CD8-positive, alpha-beta T cell (primary cell): ENCODE measurements at regions of chr14 and their contacts with region 1.

Region 1: DNA sequence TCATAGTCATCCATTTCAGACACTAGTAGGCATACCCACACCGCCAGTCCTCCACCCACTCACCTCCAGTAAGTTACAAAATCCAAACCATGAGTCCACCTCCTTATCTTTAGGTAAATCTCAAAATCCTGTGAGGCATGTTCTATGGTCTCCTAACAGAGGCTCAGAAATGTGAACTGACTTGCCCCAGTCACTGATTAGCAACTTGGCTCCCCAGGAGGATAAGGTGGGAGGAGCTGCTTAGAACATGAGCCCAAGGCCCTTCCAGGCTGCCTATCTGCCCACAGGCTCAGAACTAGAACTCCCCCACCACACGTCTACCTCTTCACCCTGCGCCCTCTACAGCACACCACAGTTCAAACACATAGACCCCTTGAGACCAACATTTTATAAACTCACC is 19.9 kb downstream of the SETD3 start:
- DNase-seq: no peak
- ATAC-seq: no peak
- H3K4me3 ChIP-seq: no peak overlapping the region
- H3K4me3 Mint-ChIP-seq: no peak overlapping the region
- H3K27ac ChIP-seq: no peak overlapping the region
- H3K27ac Mint-ChIP-seq: peak overlapping the region; percentile 15
- H3K4me1 ChIP-seq: no peaks in the 10 kb centered on the region
- H3K4me1 Mint-ChIP-seq: peaks cover 5% of the 10 kb centered on the region
- H3K27me3 ChIP-seq: no peaks in the 10 kb centered on the region
- H3K27me3 Mint-ChIP-seq: no peaks in the 10 kb centered on the region
- CTCF ChIP-seq: no peak

Region 2: DNA sequence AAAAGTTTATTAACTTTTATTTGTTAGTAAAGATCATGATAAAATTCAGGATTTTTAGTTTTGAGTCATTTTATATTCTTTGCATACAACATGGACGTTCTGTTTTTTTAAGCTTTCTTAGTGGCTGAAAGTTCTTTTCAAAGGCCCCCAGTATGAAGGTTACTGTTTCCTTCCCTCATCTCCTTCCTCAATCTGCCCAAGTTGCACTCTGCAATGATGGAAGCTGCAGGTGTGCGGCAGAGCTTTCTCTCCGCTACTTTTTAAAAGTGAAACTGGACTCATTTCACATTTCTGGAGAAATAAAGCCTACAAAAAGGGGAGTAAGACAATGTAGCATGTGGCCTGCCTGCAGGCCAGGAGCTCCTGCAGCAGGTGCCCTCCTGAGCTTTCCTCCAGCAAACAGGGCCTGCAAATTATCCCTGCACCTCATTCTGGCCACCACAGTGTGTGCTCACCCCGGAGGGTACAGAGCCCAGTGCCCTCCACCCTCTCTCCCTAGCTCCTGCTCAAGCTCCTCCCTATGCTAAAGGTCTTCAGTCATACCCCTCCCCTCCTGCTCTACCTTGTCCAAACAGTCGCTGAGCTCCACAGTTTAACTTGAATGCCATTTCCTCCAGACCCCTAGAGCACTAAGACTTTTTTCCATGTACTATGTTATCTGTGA is 59.0 kb before region 1 on chr14:
- CTCF ChIA-PET with region 1: no interaction called
- POLR2A ChIA-PET with region 1: no interaction called
- intact Hi-C with region 1: loop called in 1 of 2 experiments (anchors 2 kb)
- DNase-seq: no peak
- ATAC-seq: no peak
- H3K4me3 ChIP-seq: no peak overlapping the region
- H3K4me3 Mint-ChIP-seq: no peak overlapping the region
- H3K27ac ChIP-seq: no peak overlapping the region
- H3K27ac Mint-ChIP-seq: peak overlapping the region; percentile 69
- H3K4me1 ChIP-seq: no peaks in the 10 kb centered on the region
- H3K4me1 Mint-ChIP-seq: peaks cover 7% of the 10 kb centered on the region
- H3K27me3 ChIP-seq: no peaks in the 10 kb centered on the region
- H3K27me3 Mint-ChIP-seq: no peaks in the 10 kb centered on the region
- CTCF ChIP-seq: no peak

Region 3: DNA sequence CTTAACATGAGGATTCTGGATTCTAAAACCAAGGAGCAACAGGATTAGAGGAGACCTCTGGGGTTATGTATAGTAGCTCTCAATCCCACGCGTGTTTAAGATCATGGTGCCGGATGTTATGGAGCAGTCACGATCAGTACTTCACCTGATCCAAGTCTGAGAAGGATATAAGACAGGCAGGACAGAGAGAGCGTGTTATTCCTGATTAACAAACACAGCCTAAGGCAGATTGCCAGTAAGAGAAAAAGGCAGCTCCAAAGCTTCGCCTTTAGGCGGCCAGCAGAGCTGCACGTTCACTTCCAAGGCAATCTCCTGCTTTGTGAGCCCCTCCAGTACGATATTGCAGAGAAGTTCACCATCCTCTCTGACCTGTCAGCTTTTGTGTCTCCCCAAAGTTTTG is 14.4 kb after region 1 on chr14:
- CTCF ChIA-PET with region 1: no interaction called
- POLR2A ChIA-PET with region 1: no interaction called
- intact Hi-C with region 1: no loop called
- DNase-seq: no peak
- ATAC-seq: no peak
- H3K4me3 ChIP-seq: no peak overlapping the region
- H3K4me3 Mint-ChIP-seq: no peak overlapping the region
- H3K27ac ChIP-seq: no peak overlapping the region
- H3K27ac Mint-ChIP-seq: no peak overlapping the region
- H3K4me1 ChIP-seq: peaks cover 14% of the 10 kb centered on the region
- H3K4me1 Mint-ChIP-seq: peaks cover 53% of the 10 kb centered on the region
- H3K27me3 ChIP-seq: no peaks in the 10 kb centered on the region
- H3K27me3 Mint-ChIP-seq: no peaks in the 10 kb centered on the region
- CTCF ChIP-seq: no peak